ENCODE measurements at regions of chr10 and their contacts with region 1.

Region 1: DNA sequence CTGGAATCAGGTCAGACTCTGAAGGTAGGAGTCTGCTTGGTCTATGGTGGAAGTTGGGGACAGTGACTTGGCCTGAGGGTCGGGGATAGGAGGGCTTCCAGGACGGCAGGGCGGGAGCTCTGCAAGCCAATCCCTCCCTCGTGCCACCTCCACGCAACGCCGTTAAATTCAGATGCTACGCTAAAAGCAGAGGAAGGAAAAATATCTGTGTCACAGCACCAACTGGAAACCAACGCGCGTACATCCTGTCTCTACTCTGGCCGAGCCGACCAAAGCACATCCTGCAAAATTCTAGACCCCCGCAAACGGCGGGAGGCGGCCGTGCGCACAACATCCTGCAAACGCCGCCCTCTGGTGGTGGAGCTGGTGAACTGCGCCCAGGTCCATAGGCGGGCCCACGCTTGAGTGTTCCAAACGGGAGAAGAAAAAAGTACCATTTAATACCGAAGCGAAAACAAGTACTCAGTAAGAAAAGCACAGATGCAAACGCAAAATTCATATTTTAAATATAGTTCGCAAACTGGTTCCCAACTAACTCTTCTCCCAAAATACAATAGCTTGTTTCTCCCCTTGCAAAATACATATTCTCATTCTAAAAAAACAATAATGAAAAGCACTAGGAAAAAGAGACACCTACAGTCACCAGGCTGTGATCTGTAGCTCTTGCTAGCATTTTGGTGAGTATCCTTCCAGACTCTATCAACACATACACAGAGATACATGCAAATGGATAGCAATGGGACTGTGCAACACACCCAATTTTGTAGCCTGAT is 45.7 kb upstream of the HSPA12A start:
- DNase-seq: peak; percentile 65
- H3K4me3 Mint-ChIP-seq: peak overlapping the region; percentile 45
- H3K27ac Mint-ChIP-seq: peak overlapping the region; percentile 76
- H3K4me1 Mint-ChIP-seq: peaks cover 17% of the 10 kb centered on the region
- H3K27me3 Mint-ChIP-seq: peaks cover 3% of the 10 kb centered on the region

Region 2: GRCh38 chr10:116742367-116743265 is 45.5 kb before region 1 on chr10 and contains the start of gene HSPA12A:
- intact Hi-C with region 1: loop called (anchors 2 kb)
- DNase-seq: peak; percentile 41
- H3K4me3 Mint-ChIP-seq: peak within 1 kb of the TSS; percentile 45
- H3K27ac Mint-ChIP-seq: no peak within 1 kb of the TSS
- H3K4me1 Mint-ChIP-seq: peaks cover 2% of the 10 kb centered on the region
- H3K27me3 Mint-ChIP-seq: peaks cover 55% of the 10 kb centered on the region
- total RNA-seq, gene HSPA12A: 0.46 and 0.64 TPM in 2 replicates

Region 3: GRCh38 chr10:116910910-116911309 is 122.8 kb after region 1 on chr10:
- intact Hi-C with region 1: no loop called
- DNase-seq: no peak
- H3K4me3 Mint-ChIP-seq: no peak overlapping the region
- H3K27ac Mint-ChIP-seq: no peak overlapping the region
- H3K4me1 Mint-ChIP-seq: no peaks in the 10 kb centered on the region
- H3K27me3 Mint-ChIP-seq: no peaks in the 10 kb centered on the region

Measured in activated T-helper 2 cell treated with anti-CD3 and anti-CD28 coated beads, Interferon-gamma antibody, Interleukin-2, Interleukin-4, amounts not matched to agents 10 μg/mL and 5 μg/mL and 100 μg/mL, durations not matched to agents 14 hours and 24 hours and 36 hours (primary cell).